Lower leg skin (tissue), 4 donors: ENCODE measurements at regions of chr14 and their contacts with region 1.

Region 1: GRCh38 chr14:84825481-84825880 is 704.5 kb upstream of the FLRT2 start:
- DNase-seq: no peak
- H3K4me3 ChIP-seq: no peak overlapping the region
- CTCF ChIP-seq: no peak
- POLR2A ChIP-seq: no peak

Region 2: DNA sequence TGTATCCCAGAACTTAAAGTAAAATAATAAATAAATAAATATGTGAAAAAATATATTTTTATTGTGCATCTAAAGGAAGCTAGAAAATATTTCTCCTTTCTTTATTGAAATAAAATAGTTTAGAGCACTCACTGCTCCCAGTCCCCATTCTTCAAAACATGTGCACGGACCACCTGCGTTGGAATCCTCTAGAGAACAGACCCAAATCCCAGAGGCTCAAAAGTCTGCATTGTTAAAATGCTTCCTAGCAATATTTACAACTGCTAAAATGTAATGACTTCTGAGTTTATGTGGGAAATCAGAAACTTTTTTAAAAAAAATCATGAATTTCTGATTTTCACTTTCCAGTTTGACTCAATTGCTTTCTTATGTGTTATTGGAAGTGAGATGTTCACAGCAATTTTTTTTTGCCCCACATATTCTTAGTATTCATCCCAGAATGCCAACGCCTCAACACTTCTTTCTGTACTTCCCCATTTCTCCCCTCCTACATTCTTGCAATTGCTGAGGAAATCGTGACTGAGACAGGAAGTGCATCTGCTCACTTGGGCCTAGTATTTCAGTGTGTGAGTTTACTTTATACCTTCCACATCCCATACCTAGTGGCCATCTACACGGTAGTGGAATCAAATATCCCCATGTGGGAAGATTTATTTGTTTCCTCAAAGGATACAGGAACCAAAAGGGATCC is 588.5 kb after region 1 on chr14:
- intact Hi-C with region 1: loop called (anchors 5 kb)
- DNase-seq: no peak
- H3K4me3 ChIP-seq: no peak overlapping the region
- CTCF ChIP-seq: no peak
- POLR2A ChIP-seq: no peak